ENCODE measurements at regions of chr17 and their contacts with region 1.

Region 1: DNA sequence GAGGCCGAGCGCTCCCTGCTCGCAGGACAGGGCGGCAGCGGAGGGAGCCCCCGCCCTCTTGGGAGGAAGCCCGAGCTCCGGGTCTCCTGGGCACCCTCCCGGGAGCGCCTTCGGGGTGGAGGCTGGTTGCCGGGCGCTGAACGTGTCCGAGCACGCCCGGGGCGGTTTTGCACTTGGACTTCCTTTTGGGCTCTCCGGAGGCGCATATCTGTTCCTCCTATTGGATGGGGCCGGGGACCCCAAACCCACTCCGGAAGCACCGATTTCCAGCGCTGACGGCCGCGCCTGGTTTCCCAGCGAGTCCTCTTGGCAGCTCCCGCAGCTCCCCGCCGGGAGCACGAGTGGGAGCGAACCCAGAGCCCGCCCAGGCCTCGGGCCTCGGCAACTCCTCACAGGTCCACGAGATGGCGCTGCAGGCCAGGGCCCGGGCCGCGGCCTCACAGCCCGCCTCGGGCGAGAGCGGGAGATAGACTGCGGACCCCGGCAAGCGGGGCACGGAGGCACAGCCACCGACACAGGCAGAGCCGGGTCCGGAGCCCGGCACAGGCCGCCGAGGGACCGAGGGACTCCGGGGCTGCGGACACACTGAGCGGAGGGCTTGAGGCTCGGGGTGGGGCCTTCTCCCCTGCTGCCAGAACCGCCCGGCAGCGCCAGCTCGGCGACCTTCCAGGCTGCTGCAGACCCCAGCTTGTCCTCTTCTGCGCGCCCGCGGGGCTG is 12.7 kb downstream of the TBX2 start:
- DNase-seq: peak; percentile 47 to 96
- H3K4me3 ChIP-seq: peak overlapping the region; percentile 34
- CTCF ChIP-seq: peak in 1 of 3 donors; percentile 97
- POLR2A ChIP-seq: no peak

Region 2: GRCh38 chr17:61349350-61349749 is 63.0 kb before region 1 on chr17:
- intact Hi-C with region 1: no loop called
- DNase-seq: no peak
- H3K4me3 ChIP-seq: no peak overlapping the region
- CTCF ChIP-seq: no peak
- POLR2A ChIP-seq: no peak

Region 3: GRCh38 chr17:61545335-61545938 is 133.1 kb after region 1 on chr17:
- intact Hi-C with region 1: loop called (anchors 5 kb)
- DNase-seq: no peak
- H3K4me3 ChIP-seq: no peak overlapping the region
- CTCF ChIP-seq: no peak
- POLR2A ChIP-seq: no peak

Region 4: DNA sequence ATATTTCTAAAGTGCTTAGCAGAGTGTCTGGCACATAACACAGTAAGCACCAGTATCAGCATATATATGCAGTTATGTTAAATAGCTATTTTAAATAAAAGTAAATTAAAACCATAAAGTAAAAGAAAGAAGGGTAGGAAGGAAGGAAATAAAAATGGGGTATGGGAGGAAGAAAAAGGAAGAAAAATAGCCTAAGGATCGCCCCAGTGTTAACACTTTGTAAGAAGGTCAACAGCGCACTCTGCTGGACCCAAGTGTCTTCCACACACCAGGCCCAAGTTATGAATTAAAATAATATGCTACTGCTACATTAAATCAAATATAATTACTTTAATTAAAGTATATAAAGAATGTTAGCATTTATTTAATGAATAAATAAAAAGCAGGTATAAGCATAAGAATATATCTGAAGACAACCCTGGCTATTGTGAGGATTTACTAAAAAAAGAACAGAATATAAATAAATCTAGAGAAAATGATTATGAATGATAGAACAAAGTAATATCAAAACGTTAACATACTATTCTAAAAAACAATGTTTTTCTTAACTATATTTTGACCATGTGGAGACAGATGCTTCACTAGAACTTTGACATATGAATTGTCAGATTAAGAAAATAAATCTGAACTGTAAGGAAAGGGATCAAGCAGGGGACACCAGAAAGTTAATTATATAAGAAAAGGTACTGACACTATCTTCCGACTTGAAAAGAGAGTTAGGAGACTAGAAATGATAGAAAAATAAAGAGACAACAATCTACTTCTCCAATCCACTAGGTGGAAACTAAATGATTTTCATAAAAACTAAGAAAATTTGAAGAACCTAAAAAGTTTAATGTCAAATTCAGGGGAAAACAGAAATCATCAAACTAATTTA is 425.1 kb after region 1 on chr17:
- intact Hi-C with region 1: loop called (anchors 10 kb)
- DNase-seq: no peak
- H3K4me3 ChIP-seq: no peak overlapping the region
- CTCF ChIP-seq: no peak
- POLR2A ChIP-seq: no peak